ENCODE measurements at regions of chr11 and their contacts with region 1.

Region 1: DNA sequence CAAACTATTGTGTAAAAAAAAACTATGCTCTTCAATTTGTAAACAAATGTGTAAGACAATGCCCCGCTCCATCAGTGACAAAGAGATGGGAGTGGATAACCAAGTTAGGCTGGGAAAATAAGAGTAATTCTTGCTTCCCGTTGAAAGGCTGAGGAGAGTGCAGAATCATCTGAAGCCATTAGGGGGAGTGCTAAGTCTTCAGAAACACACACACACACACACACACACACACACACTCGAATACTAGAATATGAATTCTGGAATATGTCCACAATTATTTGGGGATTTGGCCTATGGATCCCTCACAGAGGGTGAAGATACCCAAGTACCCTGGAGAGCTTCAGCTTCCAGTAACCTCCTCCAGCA is 27.8 kb upstream of the ROBO3 start:
- DNase-seq: peak; percentile 30 to 86
- ATAC-seq: peak; percentile 80 to 82; a peak in 5 of 6 replicates
- H3K4me3 ChIP-seq: no peak overlapping the region
- H3K27ac ChIP-seq: no peak overlapping the region
- H3K4me1 ChIP-seq: peaks cover 8% of the 10 kb centered on the region; the same call in 1 of the 3 replicates
- CTCF ChIP-seq: no peak; the same call in 2 of the 3 replicates
- EP300 ChIP-seq: no peak
- POLR2A ChIP-seq: no peak
- RAD21 ChIP-seq: peak; percentile 39 to 64; a peak in 4 of 5 replicates

Region 2: GRCh38 chr11:124454552-124454951 is 382.9 kb before region 1 on chr11:
- CTCF ChIA-PET with region 1: no interaction called
- POLR2A ChIA-PET with region 1: no interaction called
- DNase-seq: no peak
- ATAC-seq: no peak
- H3K4me3 ChIP-seq: no peak overlapping the region
- H3K27ac ChIP-seq: no peak overlapping the region
- H3K4me1 ChIP-seq: no peaks in the 10 kb centered on the region
- CTCF ChIP-seq: no peak
- EP300 ChIP-seq: no peak
- POLR2A ChIP-seq: no peak
- RAD21 ChIP-seq: no peak

Region 3: GRCh38 chr11:124793466-124794278 is 43.8 kb before region 1 on chr11:
- CTCF ChIA-PET with region 1: interaction called, 10 read pairs
- POLR2A ChIA-PET with region 1: no interaction called
- DNase-seq: peak; percentile 40 to 62
- ATAC-seq: peak; percentile 59 to 88; a peak in 4 of 6 replicates
- H3K4me3 ChIP-seq: no peak overlapping the region
- H3K27ac ChIP-seq: no peak overlapping the region
- H3K4me1 ChIP-seq: peaks cover 31% of the 10 kb centered on the region
- CTCF ChIP-seq: peak; percentile 70
- EP300 ChIP-seq: no peak
- POLR2A ChIP-seq: no peak
- RAD21 ChIP-seq: peak; percentile 65 to 72

Region 4: GRCh38 chr11:124800226-124800929 is 37.1 kb before region 1 on chr11 and contains the start of gene MSANTD2:
- CTCF ChIA-PET with region 1: interaction called, 16 read pairs
- POLR2A ChIA-PET with region 1: interaction called, 14 read pairs
- DNase-seq: peak; percentile 68
- ATAC-seq: peak; percentile 96 to 97
- H3K4me3 ChIP-seq: peak within 1 kb of the TSS; percentile 100
- H3K27ac ChIP-seq: peak within 1 kb of the TSS; percentile 99 to 100
- H3K4me1 ChIP-seq: peaks cover 15% of the 10 kb centered on the region; the same call in 2 of the 3 replicates
- CTCF ChIP-seq: no peak
- EP300 ChIP-seq: no peak
- POLR2A ChIP-seq: peak; percentile 78
- RAD21 ChIP-seq: no peak
- polyA plus RNA-seq, gene MSANTD2: 6.4 TPM in 2 replicates

Region 5: GRCh38 chr11:124865921-124866583 is 28.6 kb after region 1 on chr11:
- CTCF ChIA-PET with region 1: interaction called, 37 read pairs
- POLR2A ChIA-PET with region 1: no interaction called
- DNase-seq: peak in 1 of 2 experiments; percentile 64
- ATAC-seq: peak; percentile 30 to 75; a peak in 3 of 6 replicates
- H3K4me3 ChIP-seq: peak overlapping the region; percentile 40
- H3K27ac ChIP-seq: no peak overlapping the region
- H3K4me1 ChIP-seq: peaks cover 14% of the 10 kb centered on the region; the same call in 2 of the 3 replicates
- CTCF ChIP-seq: peak; percentile 61
- EP300 ChIP-seq: no peak
- POLR2A ChIP-seq: no peak
- RAD21 ChIP-seq: peak; percentile 22 to 27; a peak in 1 of 5 replicates

Region 6: GRCh38 chr11:125025968-125026367 is 188.5 kb after region 1 on chr11:
- CTCF ChIA-PET with region 1: no interaction called
- POLR2A ChIA-PET with region 1: no interaction called
- DNase-seq: no peak
- ATAC-seq: no peak
- H3K4me3 ChIP-seq: no peak overlapping the region
- H3K27ac ChIP-seq: no peak overlapping the region
- H3K4me1 ChIP-seq: no peaks in the 10 kb centered on the region
- CTCF ChIP-seq: no peak
- EP300 ChIP-seq: no peak
- POLR2A ChIP-seq: no peak
- RAD21 ChIP-seq: no peak